ENCODE measurements at regions of chr1 and their contacts with region 1.

Region 1: GRCh38 chr1:108780937-108781574 is 34.6 kb downstream of the STXBP3 start:
- DNase-seq: no peak
- H3K4me3 ChIP-seq: no peak overlapping the region
- H3K27ac ChIP-seq: no peak overlapping the region
- H3K4me1 ChIP-seq: peaks cover 4% of the 10 kb centered on the region
- H3K27me3 ChIP-seq: no peaks in the 10 kb centered on the region
- CTCF ChIP-seq: no peak

Region 2: GRCh38 chr1:108913105-108913948 is 132.3 kb after region 1 on chr1:
- dilution Hi-C with region 1: loop called (anchors 25 kb)
- DNase-seq: no peak
- H3K4me3 ChIP-seq: no peak overlapping the region
- H3K27ac ChIP-seq: no peak overlapping the region
- H3K4me1 ChIP-seq: no peaks in the 10 kb centered on the region
- H3K27me3 ChIP-seq: no peaks in the 10 kb centered on the region
- CTCF ChIP-seq: no peak